Ascending aorta (tissue), 2 donors: ENCODE measurements at regions of chr11 and their contacts with region 1.

Region 1: DNA sequence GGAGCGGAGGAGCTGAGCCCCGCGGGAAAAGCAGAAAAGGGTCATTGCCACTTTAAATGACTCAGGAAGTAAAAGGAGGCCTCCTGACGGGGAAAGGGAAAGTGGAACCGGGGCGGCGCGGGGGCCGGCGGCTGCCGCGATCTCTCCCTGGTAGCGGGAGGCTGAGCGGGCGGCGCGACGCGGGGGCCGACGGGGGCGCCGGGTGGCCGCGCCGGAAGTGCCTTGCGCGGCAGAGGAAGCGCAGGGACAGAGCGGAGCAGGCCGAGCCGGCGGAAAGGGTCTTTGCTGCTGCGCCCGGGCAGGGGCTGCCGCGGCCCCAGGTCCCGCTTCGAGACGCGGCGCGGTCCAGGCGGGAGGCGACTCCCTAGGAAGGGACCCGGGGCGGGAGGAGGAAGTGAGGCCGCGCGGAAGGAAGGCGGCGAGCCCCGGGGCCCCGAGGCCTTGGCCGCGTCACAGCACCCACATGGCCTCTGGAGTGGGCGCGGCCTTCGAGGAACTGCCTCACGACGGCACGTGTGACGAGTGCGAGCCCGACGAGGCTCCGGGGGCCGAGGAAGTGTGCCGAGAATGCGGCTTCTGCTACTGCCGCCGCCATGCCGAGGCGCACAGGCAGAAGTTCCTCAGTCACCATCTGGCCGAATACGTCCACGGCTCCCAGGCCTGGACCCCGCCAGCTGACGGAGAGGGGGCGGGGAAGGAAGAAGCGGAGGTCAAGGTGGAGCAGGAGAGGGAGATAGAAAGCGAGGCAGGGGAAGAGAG is at the start of gene TRIM44:
- DNase-seq: peak; percentile 26 to 92
- H3K4me3 ChIP-seq: peak within 1 kb of the TSS; percentile 81 to 93
- H3K27ac ChIP-seq: peak within 1 kb of the TSS; percentile 94 to 97
- H3K4me1 ChIP-seq: peaks cover 0 to 9% of the 10 kb centered on the region in 2 donors
- H3K27me3 ChIP-seq: no peaks in the 10 kb centered on the region
- CTCF ChIP-seq: no peak
- total RNA-seq, gene TRIM44: 6.1 TPM

Region 2: GRCh38 chr11:35111161-35112055 is 551.4 kb before region 1 on chr11:
- intact Hi-C with region 1: loop called (anchors 10 kb)
- DNase-seq: no peak
- H3K4me3 ChIP-seq: no peak overlapping the region
- H3K27ac ChIP-seq: peak overlapping the region in 1 of 2 donors; percentile 33
- H3K4me1 ChIP-seq: peaks cover 0 to 15% of the 10 kb centered on the region in 2 donors
- H3K27me3 ChIP-seq: no peaks in the 10 kb centered on the region
- CTCF ChIP-seq: no peak

Region 3: DNA sequence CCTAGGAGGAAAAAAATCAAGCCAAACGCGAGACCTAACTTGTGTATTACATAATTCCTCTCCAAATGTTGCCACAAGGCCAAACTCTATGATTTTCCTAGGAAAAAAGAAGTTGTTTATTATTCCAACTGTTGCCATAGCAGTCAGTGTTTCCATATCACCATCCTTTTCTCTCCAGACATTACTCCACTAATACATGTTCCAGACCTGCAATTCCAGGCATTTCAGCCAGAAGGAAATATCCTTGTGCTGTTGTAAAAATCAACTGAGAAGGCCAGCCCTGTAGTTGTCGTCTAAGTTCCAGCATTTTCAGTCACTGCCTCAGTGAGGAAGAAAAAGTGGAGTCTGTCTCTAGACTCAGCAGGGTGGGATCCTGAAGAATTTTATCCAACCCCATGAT is 104.3 kb before region 1 on chr11:
- intact Hi-C with region 1: no loop called
- DNase-seq: no peak
- H3K4me3 ChIP-seq: no peak overlapping the region
- H3K27ac ChIP-seq: peak overlapping the region; percentile 11 to 46
- H3K4me1 ChIP-seq: peaks cover 0 to 7% of the 10 kb centered on the region in 2 donors
- H3K27me3 ChIP-seq: no peaks in the 10 kb centered on the region
- CTCF ChIP-seq: peak in 1 of 3 experiments; percentile 14